Mammary epithelial cell (primary cell): ENCODE measurements at regions of chr3 and their contacts with region 1.

Region 1: DNA sequence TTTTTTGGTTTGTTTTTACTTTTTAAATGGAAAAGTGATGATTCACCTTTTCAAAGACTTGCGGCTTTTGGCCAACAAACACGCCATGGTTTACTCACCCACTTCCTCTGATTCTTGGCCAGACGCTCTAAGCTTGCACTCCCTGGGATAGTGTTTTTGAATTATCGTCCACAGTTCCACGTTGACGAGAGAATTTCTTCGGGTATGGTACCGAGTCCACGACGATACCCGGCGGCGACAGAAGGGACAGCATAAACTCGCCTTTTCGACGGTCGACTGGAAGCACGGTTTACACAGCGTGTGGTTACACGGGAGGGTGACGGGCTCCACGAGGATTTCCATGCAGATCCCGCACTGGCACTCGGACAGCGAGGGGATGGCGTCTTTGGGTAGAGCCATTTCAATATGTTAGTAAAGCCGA is 783 bp downstream of the RNF168 start:
- DNase-seq: peak; percentile 83
- H3K4me3 ChIP-seq: peak overlapping the region; percentile 80 to 94 (median 89)
- H3K27ac ChIP-seq: peak overlapping the region; percentile 86
- H3K4me1 ChIP-seq: peaks cover 16% of the 10 kb centered on the region
- H3K27me3 ChIP-seq: no peaks in the 10 kb centered on the region
- CTCF ChIP-seq: no peak

Region 2: DNA sequence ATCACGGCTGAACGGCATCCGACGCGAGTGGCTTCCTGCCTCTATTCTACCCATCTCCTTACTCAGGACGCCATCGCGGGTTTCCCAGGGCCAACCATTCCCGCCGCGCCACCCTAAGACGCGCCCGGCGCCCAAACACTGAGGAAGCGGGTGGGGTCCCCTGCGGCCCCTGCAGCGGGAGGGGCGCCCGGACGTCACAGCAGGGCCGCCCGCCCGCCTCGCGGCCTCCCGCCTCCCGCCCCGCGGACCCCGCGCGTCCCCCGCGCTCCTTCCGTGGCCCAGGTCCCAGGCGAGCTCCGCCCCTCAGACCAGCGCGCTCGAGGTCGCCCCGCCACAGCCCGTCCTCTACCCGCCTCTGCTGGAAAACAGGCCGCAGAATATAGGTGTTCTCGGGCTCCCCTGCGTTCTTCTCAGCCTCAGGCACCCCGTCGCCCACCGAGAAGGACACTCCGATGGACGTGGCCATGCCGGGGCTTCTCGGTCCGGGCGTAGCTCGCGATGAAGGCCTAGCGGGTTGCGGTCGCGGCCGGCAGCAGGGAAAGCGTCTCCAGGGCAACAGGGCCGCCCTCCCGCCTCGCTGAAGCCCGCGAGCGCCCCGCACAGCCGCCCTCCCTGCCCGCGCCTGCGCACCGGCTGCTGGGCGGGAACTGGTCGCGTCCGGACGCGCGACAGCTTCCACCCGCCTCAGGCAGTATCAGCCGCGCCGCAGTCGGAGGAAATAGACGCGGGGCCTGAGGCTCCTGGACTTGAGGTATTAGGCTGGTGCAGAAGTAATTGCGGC is 184.9 kb before region 1 on chr3 and contains the start of gene DYNLT2B:
- CTCF ChIA-PET with region 1: no interaction called
- dilution Hi-C with region 1: no loop called
- in situ Hi-C with region 1: no loop called
- intact Hi-C with region 1: loop called (anchors 1 kb)
- DNase-seq: peak; percentile 91
- H3K4me3 ChIP-seq: peak within 1 kb of the TSS; percentile 63 to 99 (median 87)
- H3K27ac ChIP-seq: peak within 1 kb of the TSS; percentile 79
- H3K4me1 ChIP-seq: peaks cover 28% of the 10 kb centered on the region
- H3K27me3 ChIP-seq: no peaks in the 10 kb centered on the region
- CTCF ChIP-seq: peak in 1 of 2 donors; percentile 9
- total RNA-seq, gene DYNLT2B: 10.3 to 17.3 TPM

Region 3: DNA sequence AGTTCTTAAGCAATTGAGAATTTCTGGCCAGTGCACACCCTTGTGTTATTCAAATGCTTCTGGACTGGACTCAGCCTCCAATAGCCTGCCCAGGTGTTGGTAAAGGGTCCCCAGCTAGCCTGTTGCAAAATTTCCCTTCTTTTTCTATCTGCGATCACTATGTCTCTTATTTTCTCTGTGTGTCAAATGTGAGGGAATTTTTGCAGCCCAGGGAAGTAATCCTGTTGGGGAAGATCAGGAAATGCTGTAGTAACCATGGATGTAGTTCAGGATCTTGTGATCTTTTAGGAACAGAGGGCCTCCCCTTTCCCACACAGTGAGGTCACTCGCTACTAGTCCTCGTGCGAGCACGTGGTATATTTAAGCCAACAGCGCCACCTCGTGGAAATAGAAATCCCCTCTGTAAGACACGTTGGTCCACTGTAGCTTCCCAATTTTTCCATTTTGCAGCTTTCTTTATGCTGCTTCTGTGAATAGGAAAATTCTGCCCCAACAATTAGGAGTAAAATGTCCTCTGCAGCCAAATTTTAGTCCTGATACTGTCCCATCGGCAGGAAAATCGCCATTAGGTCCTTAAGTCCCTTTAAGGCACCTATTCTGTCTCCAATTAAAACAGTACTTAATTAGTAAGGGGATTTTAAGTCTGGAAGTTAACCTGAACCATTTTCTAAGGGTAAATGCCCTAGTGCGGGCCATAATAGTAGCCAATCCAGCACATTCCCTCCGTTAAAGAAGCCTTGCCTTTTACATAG is 16.4 kb after region 1 on chr3:
- CTCF ChIA-PET with region 1: no interaction called
- dilution Hi-C with region 1: no loop called
- in situ Hi-C with region 1: no loop called
- intact Hi-C with region 1: loop called (anchors 2 kb)
- DNase-seq: peak; percentile 63
- H3K4me3 ChIP-seq: no peak overlapping the region
- H3K27ac ChIP-seq: no peak overlapping the region
- H3K4me1 ChIP-seq: no peaks in the 10 kb centered on the region
- H3K27me3 ChIP-seq: no peaks in the 10 kb centered on the region
- CTCF ChIP-seq: peak; percentile 54 to 66

Region 4: GRCh38 chr3:196568246-196569002 is 65.6 kb after region 1 on chr3 and contains the starts of genes FBXO45 and WDR53:
- CTCF ChIA-PET with region 1: no interaction called
- dilution Hi-C with region 1: no loop called
- in situ Hi-C with region 1: no loop called
- intact Hi-C with region 1: loop called (anchors 2 kb)
- DNase-seq: peak; percentile 97
- H3K4me3 ChIP-seq: peak within 1 kb of the TSS; percentile 78 to 94 (median 94)
- H3K27ac ChIP-seq: peak within 1 kb of the TSS; percentile 80
- H3K4me1 ChIP-seq: peaks cover 24% of the 10 kb centered on the region
- H3K27me3 ChIP-seq: no peaks in the 10 kb centered on the region
- CTCF ChIP-seq: no peak
- total RNA-seq, gene FBXO45: 9.2 to 13.5 TPM
- total RNA-seq, gene WDR53: 5.3 to 19.5 TPM

Region 5: GRCh38 chr3:196774191-196774820 is 271.5 kb after region 1 on chr3:
- CTCF ChIA-PET with region 1: no interaction called
- dilution Hi-C with region 1: no loop called
- in situ Hi-C with region 1: no loop called
- intact Hi-C with region 1: no loop called
- DNase-seq: peak; percentile 28
- H3K4me3 ChIP-seq: no peak overlapping the region
- H3K27ac ChIP-seq: no peak overlapping the region
- H3K4me1 ChIP-seq: peaks cover 26% of the 10 kb centered on the region
- H3K27me3 ChIP-seq: no peaks in the 10 kb centered on the region
- CTCF ChIP-seq: no peak